ENCODE measurements at regions of chr19 and their contacts with region 1.

Region 1: GRCh38 chr19:35495107-35496064 is 5.1 kb upstream of the KRTDAP start:
- DNase-seq: peak; percentile 59
- H3K4me3 ChIP-seq: no peak overlapping the region
- H3K27ac ChIP-seq: no peak overlapping the region
- H3K4me1 ChIP-seq: peaks cover 0 to 7% (median 2%) of the 10 kb centered on the region in 4 donors
- H3K27me3 ChIP-seq: no peaks in the 10 kb centered on the region
- CTCF ChIP-seq: peak; percentile 94 to 99 (median 98)
- EP300 ChIP-seq: no peak
- POLR2A ChIP-seq: no peak

Region 2: GRCh38 chr19:35269421-35270117 is 225.8 kb before region 1 on chr19:
- in situ Hi-C with region 1: no loop called
- intact Hi-C with region 1: loop called (anchors 10 kb)
- DNase-seq: peak; percentile 91
- H3K4me3 ChIP-seq: peak overlapping the region; percentile 58 to 85 (median 76)
- H3K27ac ChIP-seq: peak overlapping the region; percentile 95 to 99 (median 98)
- H3K4me1 ChIP-seq: peaks cover 0 to 36% (median 14%) of the 10 kb centered on the region in 4 donors
- H3K27me3 ChIP-seq: no peaks in the 10 kb centered on the region
- CTCF ChIP-seq: peak; percentile 50 to 87 (median 76)
- EP300 ChIP-seq: no peak
- POLR2A ChIP-seq: peak; percentile 10

Region 3: GRCh38 chr19:35347171-35347929 is 148.0 kb before region 1 on chr19 and contains the start of gene FFAR1:
- in situ Hi-C with region 1: loop called in 3 of 4 experiments (anchors 10 kb)
- intact Hi-C with region 1: loop called (anchors 5 kb)
- DNase-seq: peak; percentile 40
- H3K4me3 ChIP-seq: no peak within 1 kb of the TSS
- H3K27ac ChIP-seq: no peak within 1 kb of the TSS
- H3K4me1 ChIP-seq: no peaks in the 10 kb centered on the region
- H3K27me3 ChIP-seq: peaks cover 4% of the 10 kb centered on the region
- CTCF ChIP-seq: no peak
- EP300 ChIP-seq: no peak
- POLR2A ChIP-seq: no peak
- total RNA-seq, gene FFAR1: 0.32 TPM in 1 of 4 donors, not detected in the others

Region 4: GRCh38 chr19:35352448-35353304 is 142.7 kb before region 1 on chr19:
- in situ Hi-C with region 1: loop called in 3 of 4 experiments (anchors 10 kb)
- intact Hi-C with region 1: loop called (anchors 5 kb)
- DNase-seq: peak; percentile 73
- H3K4me3 ChIP-seq: no peak overlapping the region
- H3K27ac ChIP-seq: no peak overlapping the region
- H3K4me1 ChIP-seq: no peaks in the 10 kb centered on the region
- H3K27me3 ChIP-seq: no peaks in the 10 kb centered on the region
- CTCF ChIP-seq: peak; percentile 73 to 88 (median 78)
- EP300 ChIP-seq: no peak
- POLR2A ChIP-seq: no peak

Measured in transverse colon (tissue), 4 donors.